CD4-positive, alpha-beta T cell (primary cell): ENCODE measurements at regions of chr15 and their contacts with region 1.

Region 1: DNA sequence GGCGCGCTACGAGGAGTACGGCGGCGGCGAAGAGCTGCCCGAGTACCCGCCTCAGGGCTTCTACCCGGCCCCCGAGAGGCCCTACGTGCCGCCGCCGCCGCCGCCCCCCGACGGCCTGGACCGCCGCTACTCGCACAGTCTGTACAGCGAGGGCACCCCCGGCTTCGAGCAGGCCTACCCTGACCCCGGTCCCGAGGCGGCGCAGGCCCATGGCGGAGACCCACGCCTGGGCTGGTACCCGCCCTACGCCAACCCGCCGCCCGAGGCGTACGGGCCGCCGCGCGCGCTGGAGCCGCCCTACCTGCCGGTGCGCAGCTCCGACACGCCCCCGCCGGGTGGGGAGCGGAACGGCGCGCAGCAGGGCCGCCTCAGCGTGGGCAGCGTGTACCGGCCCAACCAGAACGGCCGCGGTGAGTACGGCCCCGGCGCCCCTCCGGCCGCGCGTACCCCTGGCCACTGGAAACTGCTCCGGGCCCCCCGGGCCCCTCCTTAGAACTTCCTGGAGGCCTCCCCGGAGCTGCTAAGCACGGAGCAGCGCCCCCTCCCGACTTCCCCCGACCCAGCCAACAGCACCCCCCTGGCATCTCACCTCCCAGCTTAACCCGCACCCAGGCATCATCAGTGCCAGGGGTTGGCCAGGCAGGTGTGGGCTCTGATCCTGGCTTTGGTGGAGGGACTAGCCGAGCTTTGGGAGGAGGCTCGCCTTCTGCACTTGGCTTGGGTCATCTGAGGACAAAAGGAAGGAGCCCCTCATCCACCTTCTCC is 1.4 kb downstream of the LOXL1 start:
- DNase-seq: peak; percentile 68 to 89 (median 78)
- ATAC-seq: peak; percentile 87
- H3K4me3 ChIP-seq: peak overlapping the region; percentile 59
- H3K4me3 Mint-ChIP-seq: peak overlapping the region; percentile 79
- H3K27ac ChIP-seq: peak overlapping the region in 1 of 2 donors; percentile 37
- H3K27ac Mint-ChIP-seq: peak overlapping the region; percentile 40
- H3K4me1 ChIP-seq: peaks cover 82% of the 10 kb centered on the region
- H3K4me1 Mint-ChIP-seq: peaks cover 40% of the 10 kb centered on the region
- H3K27me3 ChIP-seq: no peaks in the 10 kb centered on the region
- H3K27me3 Mint-ChIP-seq: no peaks in the 10 kb centered on the region
- CTCF ChIP-seq: peak; percentile 94

Region 2: GRCh38 chr15:73873889-73874511 is 53.7 kb before region 1 on chr15:
- CTCF ChIA-PET with region 1: interaction called, 10 read pairs
- POLR2A ChIA-PET with region 1: no interaction called
- intact Hi-C with region 1: loop called (anchors 1 to 5 kb)
- DNase-seq: peak in 8 of 14 experiments; percentile 4 to 72 (median 26)
- ATAC-seq: no peak
- H3K4me3 ChIP-seq: no peak overlapping the region
- H3K4me3 Mint-ChIP-seq: no peak overlapping the region
- H3K27ac ChIP-seq: no peak overlapping the region
- H3K27ac Mint-ChIP-seq: no peak overlapping the region
- H3K4me1 ChIP-seq: no peaks in the 10 kb centered on the region
- H3K4me1 Mint-ChIP-seq: no peaks in the 10 kb centered on the region
- H3K27me3 ChIP-seq: peaks cover 18 to 24% of the 10 kb centered on the region in 2 experiments
- H3K27me3 Mint-ChIP-seq: peaks cover 49% of the 10 kb centered on the region
- CTCF ChIP-seq: peak; percentile 81

Region 3: DNA sequence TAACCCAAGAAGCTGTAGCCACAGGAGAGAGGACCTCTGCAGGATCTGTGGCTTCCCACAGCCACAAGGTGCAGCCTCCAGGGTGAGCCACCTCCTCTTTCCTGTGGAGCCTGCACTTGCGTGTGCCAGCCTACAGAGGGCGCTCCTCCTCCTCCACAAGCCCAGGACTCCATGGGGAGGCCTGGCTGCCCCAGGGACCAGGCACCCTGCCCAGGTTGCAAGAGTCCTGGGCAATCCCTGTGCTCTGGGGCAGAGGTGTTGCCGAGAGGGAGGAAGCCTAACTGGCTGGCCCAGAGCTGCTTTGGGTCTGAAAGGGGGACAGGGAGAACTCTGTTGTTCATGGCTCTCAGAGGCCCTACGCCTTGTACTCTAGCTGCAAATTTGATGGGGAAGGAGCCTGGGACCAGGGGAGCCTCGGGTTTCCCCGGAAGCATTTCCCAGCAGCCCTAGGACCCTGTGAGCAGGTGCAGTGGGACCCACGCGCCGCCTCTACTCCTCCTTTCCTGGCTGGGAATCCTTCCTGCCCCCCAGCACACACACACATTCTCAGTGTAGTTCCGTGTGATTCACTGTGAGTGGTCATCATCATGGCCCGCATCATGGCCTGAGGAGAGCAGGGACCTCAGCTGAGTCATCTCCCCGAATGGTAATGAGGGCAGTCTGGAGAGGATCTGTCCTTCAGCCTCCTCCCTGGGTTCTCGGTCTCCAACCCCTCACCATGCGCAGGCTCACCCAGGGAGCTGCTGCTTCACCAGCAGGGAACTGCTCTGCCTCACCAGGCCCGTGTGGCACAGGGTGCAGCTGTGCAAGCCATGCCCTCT is 30.0 kb before region 1 on chr15:
- CTCF ChIA-PET with region 1: interaction called, 11 read pairs
- POLR2A ChIA-PET with region 1: no interaction called
- intact Hi-C with region 1: no loop called
- DNase-seq: peak; percentile 16 to 79 (median 35)
- ATAC-seq: peak; percentile 85
- H3K4me3 ChIP-seq: no peak overlapping the region
- H3K4me3 Mint-ChIP-seq: no peak overlapping the region
- H3K27ac ChIP-seq: no peak overlapping the region
- H3K27ac Mint-ChIP-seq: no peak overlapping the region
- H3K4me1 ChIP-seq: peaks cover 5% of the 10 kb centered on the region
- H3K4me1 Mint-ChIP-seq: no peaks in the 10 kb centered on the region
- H3K27me3 ChIP-seq: no peaks in the 10 kb centered on the region
- H3K27me3 Mint-ChIP-seq: peaks cover 4% of the 10 kb centered on the region
- CTCF ChIP-seq: peak; percentile 65

Region 4: DNA sequence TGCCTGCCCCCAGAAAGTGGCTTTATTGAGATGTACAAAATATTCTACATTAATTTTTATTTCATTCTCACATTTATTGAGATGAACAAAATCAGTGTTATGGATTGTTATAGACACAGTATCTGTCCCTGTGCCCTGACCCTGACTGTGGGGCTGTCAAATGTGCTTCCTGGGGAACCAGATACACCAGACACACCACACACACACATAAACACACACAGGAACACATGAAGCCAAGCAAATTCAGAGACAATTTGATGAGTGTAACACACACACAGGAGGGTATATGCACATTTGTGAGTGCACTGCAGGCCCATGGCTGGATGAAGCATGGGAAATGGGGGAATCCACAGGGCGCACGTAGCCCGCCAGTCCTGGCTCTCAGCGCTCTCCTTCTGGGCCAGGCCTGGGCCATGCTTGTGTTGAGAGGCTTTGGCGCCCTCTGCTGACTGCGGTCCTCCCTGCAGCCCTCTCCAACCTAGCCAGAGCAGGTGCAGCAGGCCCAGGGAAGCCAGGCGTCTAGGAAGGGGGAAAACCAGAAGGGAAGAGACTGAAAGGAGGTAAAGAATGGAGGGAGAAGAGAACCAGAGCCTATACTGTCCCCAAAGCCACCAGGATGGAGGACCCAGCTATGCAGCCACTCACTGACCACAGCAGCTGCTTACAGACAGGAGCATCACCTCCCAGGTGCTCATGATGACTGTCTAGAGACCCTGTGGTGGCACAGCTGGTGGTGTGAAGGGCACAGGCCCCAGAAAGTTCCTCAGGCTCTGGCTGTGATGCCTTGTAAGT is 19.4 kb before region 1 on chr15:
- CTCF ChIA-PET with region 1: interaction called, 14 read pairs
- POLR2A ChIA-PET with region 1: interaction called, 4 read pairs
- intact Hi-C with region 1: no loop called
- DNase-seq: peak; percentile 58 to 82 (median 67)
- ATAC-seq: peak; percentile 97
- H3K4me3 ChIP-seq: no peak overlapping the region
- H3K4me3 Mint-ChIP-seq: no peak overlapping the region
- H3K27ac ChIP-seq: no peak overlapping the region
- H3K27ac Mint-ChIP-seq: no peak overlapping the region
- H3K4me1 ChIP-seq: no peaks in the 10 kb centered on the region
- H3K4me1 Mint-ChIP-seq: no peaks in the 10 kb centered on the region
- H3K27me3 ChIP-seq: no peaks in the 10 kb centered on the region
- H3K27me3 Mint-ChIP-seq: no peaks in the 10 kb centered on the region
- CTCF ChIP-seq: peak; percentile 84

Region 5: GRCh38 chr15:73950831-73951561 is 23.3 kb after region 1 on chr15:
- CTCF ChIA-PET with region 1: interaction called, 11 read pairs
- POLR2A ChIA-PET with region 1: interaction called, 5 read pairs
- intact Hi-C with region 1: no loop called
- DNase-seq: peak; percentile 63 to 85 (median 75)
- ATAC-seq: peak; percentile 97
- H3K4me3 ChIP-seq: no peak overlapping the region
- H3K4me3 Mint-ChIP-seq: no peak overlapping the region
- H3K27ac ChIP-seq: no peak overlapping the region
- H3K27ac Mint-ChIP-seq: peak overlapping the region; percentile 40
- H3K4me1 ChIP-seq: peaks cover 12% of the 10 kb centered on the region
- H3K4me1 Mint-ChIP-seq: peaks cover 9% of the 10 kb centered on the region
- H3K27me3 ChIP-seq: no peaks in the 10 kb centered on the region
- H3K27me3 Mint-ChIP-seq: no peaks in the 10 kb centered on the region
- CTCF ChIP-seq: peak; percentile 86

Region 6: GRCh38 chr15:73959012-73959581 is 31.4 kb after region 1 on chr15:
- CTCF ChIA-PET with region 1: interaction called, 12 read pairs
- POLR2A ChIA-PET with region 1: interaction called, 8 read pairs
- intact Hi-C with region 1: loop called in 1 of 2 experiments (anchors 2 kb)
- DNase-seq: peak in 12 of 14 experiments; percentile 20 to 72 (median 42)
- ATAC-seq: peak; percentile 99
- H3K4me3 ChIP-seq: peak overlapping the region; percentile 10
- H3K4me3 Mint-ChIP-seq: peak overlapping the region; percentile 74
- H3K27ac ChIP-seq: peak overlapping the region in 1 of 2 donors; percentile 43
- H3K27ac Mint-ChIP-seq: peak overlapping the region; percentile 83
- H3K4me1 ChIP-seq: peaks cover 27% of the 10 kb centered on the region
- H3K4me1 Mint-ChIP-seq: peaks cover 37% of the 10 kb centered on the region
- H3K27me3 ChIP-seq: no peaks in the 10 kb centered on the region
- H3K27me3 Mint-ChIP-seq: no peaks in the 10 kb centered on the region
- CTCF ChIP-seq: peak; percentile 38

Region 7: GRCh38 chr15:73964736-73965093 is 37.1 kb after region 1 on chr15:
- CTCF ChIA-PET with region 1: interaction called, 7 read pairs
- POLR2A ChIA-PET with region 1: interaction called, 8 read pairs
- intact Hi-C with region 1: loop called in 1 of 2 experiments (anchors 2 kb)
- DNase-seq: peak; percentile 76 to 94 (median 86)
- ATAC-seq: peak; percentile 82
- H3K4me3 ChIP-seq: peak overlapping the region; percentile 57
- H3K4me3 Mint-ChIP-seq: peak overlapping the region; percentile 73
- H3K27ac ChIP-seq: no peak overlapping the region
- H3K27ac Mint-ChIP-seq: peak overlapping the region; percentile 73
- H3K4me1 ChIP-seq: peaks cover 33% of the 10 kb centered on the region
- H3K4me1 Mint-ChIP-seq: peaks cover 46% of the 10 kb centered on the region
- H3K27me3 ChIP-seq: no peaks in the 10 kb centered on the region
- H3K27me3 Mint-ChIP-seq: no peaks in the 10 kb centered on the region
- CTCF ChIP-seq: peak; percentile 98